Spleen (tissue), 13 donors: ENCODE measurements at regions of chr14 and their contacts with region 1.

Region 1: GRCh38 chr14:61444215-61444768 is 122.9 kb downstream of the PRKCH start:
- DNase-seq: peak; percentile 81
- H3K4me3 ChIP-seq: no peak overlapping the region
- H3K27ac ChIP-seq: peak overlapping the region in 5 of 8 donors; percentile 12 to 65 (median 46)
- H3K4me1 ChIP-seq: peaks cover 15 to 96% (median 41%) of the 10 kb centered on the region in 6 donors
- H3K27me3 ChIP-seq: no peaks in the 10 kb centered on the region
- CTCF ChIP-seq: peak in 1 of 11 experiments; percentile 7
- POLR2A ChIP-seq: no peak

Region 2: DNA sequence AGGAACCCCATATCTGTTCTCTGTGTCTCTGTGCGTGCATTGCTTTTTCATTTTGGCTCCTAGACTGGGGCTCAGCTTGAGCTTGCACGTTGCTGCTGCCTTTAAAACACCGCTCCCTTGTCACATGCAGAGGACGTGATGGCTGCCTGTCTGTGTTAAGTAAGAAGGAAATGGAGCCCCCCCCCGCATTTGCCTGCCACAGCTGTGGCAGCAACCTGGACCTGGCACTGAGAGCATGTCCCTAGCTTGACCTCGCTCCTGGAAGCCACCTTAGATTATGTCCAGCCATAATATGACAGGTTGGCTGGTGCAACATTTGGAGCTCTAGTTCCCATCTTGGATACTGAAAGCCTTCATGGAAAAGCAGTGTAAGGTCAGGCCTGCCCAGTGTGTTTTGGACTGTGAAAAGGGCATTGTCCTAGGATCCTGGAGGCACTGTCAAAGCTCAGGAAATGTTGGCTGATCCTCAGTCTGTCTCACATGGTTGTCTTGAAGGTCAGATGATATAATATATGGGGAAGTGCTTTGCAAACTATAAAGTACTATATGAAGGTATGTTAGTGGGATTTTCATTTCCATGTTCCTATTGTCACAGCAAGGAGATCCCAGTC is 49.1 kb before region 1 on chr14:
- intact Hi-C with region 1: loop called (anchors 10 kb)
- DNase-seq: no peak
- H3K4me3 ChIP-seq: no peak overlapping the region
- H3K27ac ChIP-seq: peak overlapping the region in 2 of 8 donors; percentile 16 to 66
- H3K4me1 ChIP-seq: peaks cover 5 to 100% (median 34%) of the 10 kb centered on the region in 6 donors
- H3K27me3 ChIP-seq: no peaks in the 10 kb centered on the region
- CTCF ChIP-seq: no peak
- POLR2A ChIP-seq: no peak